Panc1 (cell line): ENCODE measurements at regions of chr14 and their contacts with region 1.

Region 1: DNA sequence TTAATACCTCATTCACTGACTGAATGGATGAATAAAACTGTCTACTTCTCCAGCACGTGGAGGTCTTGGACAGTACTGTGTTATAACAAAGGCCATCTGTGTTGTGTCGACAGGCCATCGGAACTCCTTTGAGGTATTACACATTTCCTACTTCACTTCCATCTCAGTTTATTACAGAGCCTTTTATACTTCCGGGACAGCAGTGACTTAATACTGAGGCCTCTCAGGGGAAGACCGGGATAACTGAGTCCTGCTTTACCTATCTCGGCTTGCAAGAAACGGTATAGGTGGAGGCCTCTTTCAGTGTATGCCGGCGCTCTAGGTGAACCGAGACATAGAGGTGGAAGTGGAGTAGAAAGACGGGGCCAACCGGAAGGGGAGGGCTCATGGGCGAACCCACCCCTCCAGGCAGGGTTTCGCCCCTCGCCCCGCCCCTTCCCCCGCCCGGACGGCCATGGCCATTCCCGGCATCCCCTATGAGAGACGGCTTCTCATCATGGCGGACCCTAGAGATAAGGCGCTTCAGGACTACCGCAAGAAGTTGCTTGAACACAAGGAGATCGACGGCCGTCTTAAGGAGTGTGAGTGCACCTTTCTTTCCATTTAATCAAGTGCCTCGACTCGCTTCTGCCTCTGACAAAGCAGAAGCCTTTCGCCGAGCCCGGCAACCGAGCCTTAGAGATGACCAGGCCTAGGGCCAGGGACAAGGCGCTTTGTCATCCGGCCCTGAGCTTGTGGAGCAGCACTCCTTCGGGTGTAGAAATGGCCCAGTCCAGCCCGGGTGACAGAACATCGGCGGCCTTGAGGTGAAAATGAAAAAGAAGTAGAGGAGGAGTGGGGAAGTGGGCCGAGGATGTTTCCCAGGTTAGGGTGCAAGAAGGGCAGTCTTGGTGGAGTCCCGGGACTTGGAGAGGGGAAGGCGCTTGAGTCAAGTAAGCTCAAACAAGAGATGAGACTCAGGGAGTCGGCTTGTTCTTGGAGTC is at the start of gene PSMC6:
- DNase-seq: peak; percentile 67
- ATAC-seq: peak; percentile 100
- H3K4me3 ChIP-seq: peak within 1 kb of the TSS; percentile 88 to 96
- H3K27ac ChIP-seq: peak within 1 kb of the TSS; percentile 87
- H3K4me1 ChIP-seq: peaks cover 5% of the 10 kb centered on the region; the same call in 1 of the 2 replicates
- H3K27me3 ChIP-seq: no peaks in the 10 kb centered on the region
- CTCF ChIP-seq: no peak
- total RNA-seq, gene PSMC6: 62.1 TPM

Region 2: DNA sequence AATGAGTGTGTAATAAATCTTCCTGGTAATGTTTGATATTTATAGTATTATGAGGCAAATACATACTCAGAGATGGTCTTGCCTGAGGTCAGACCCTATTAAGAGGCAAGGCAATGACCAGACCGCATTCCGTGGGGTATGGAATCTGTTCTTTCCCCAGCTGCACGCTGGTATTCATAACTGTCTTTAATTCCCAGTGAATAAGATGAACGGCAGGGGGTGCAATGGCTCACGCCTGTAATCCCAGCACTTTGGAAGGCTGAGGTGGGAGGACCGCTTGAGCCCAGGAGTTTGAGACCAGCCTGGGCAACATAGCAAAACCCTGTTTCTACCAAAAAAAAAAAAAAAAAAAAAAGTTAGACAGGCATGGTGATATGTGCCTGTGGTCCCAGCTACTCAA is 56.2 kb before region 1 on chr14:
- CTCF ChIA-PET with region 1: interaction called, 14 read pairs
- POLR2A ChIA-PET with region 1: no interaction called
- in situ Hi-C with region 1: no loop called
- intact Hi-C with region 1: no loop called
- DNase-seq: no peak
- ATAC-seq: peak; percentile 58; the same call in 1 of the 2 replicates
- H3K4me3 ChIP-seq: no peak overlapping the region
- H3K27ac ChIP-seq: no peak overlapping the region
- H3K4me1 ChIP-seq: no peaks in the 10 kb centered on the region
- H3K27me3 ChIP-seq: no peaks in the 10 kb centered on the region
- CTCF ChIP-seq: peak; percentile 66

Region 3: GRCh38 chr14:52778702-52779101 is 71.7 kb after region 1 on chr14:
- CTCF ChIA-PET with region 1: interaction called, 10 read pairs
- POLR2A ChIA-PET with region 1: no interaction called
- in situ Hi-C with region 1: no loop called
- intact Hi-C with region 1: no loop called
- DNase-seq: no peak
- ATAC-seq: no peak
- H3K4me3 ChIP-seq: no peak overlapping the region
- H3K27ac ChIP-seq: no peak overlapping the region
- H3K4me1 ChIP-seq: no peaks in the 10 kb centered on the region
- H3K27me3 ChIP-seq: no peaks in the 10 kb centered on the region
- CTCF ChIP-seq: no peak